ENCODE measurements at regions of chr14 and their contacts with region 1.

Region 1: GRCh38 chr14:91286530-91286937 is 42.0 kb upstream of the GPR68 start:
- H3K4me3 ChIP-seq: no peak overlapping the region
- H3K27ac ChIP-seq: no peak overlapping the region
- H3K4me1 ChIP-seq: peaks cover 19% of the 10 kb centered on the region
- CTCF ChIP-seq: peak; percentile 83

Region 2: GRCh38 chr14:90815822-90816700 is 470.5 kb before region 1 on chr14 and contains the start of gene TTC7B:
- CTCF ChIA-PET with region 1: no interaction called
- POLR2A ChIA-PET with region 1: no interaction called
- H3K4me3 ChIP-seq: peak within 1 kb of the TSS; percentile 85
- H3K27ac ChIP-seq: peak within 1 kb of the TSS; percentile 69; the same call in 1 of the 2 replicates
- H3K4me1 ChIP-seq: peaks cover 9% of the 10 kb centered on the region
- CTCF ChIP-seq: no peak

Region 3: GRCh38 chr14:91298576-91298975 is 12.0 kb after region 1 on chr14:
- CTCF ChIA-PET with region 1: interaction called, 10 read pairs
- POLR2A ChIA-PET with region 1: no interaction called
- H3K4me3 ChIP-seq: no peak overlapping the region
- H3K27ac ChIP-seq: no peak overlapping the region
- H3K4me1 ChIP-seq: no peaks in the 10 kb centered on the region
- CTCF ChIP-seq: no peak

Region 4: DNA sequence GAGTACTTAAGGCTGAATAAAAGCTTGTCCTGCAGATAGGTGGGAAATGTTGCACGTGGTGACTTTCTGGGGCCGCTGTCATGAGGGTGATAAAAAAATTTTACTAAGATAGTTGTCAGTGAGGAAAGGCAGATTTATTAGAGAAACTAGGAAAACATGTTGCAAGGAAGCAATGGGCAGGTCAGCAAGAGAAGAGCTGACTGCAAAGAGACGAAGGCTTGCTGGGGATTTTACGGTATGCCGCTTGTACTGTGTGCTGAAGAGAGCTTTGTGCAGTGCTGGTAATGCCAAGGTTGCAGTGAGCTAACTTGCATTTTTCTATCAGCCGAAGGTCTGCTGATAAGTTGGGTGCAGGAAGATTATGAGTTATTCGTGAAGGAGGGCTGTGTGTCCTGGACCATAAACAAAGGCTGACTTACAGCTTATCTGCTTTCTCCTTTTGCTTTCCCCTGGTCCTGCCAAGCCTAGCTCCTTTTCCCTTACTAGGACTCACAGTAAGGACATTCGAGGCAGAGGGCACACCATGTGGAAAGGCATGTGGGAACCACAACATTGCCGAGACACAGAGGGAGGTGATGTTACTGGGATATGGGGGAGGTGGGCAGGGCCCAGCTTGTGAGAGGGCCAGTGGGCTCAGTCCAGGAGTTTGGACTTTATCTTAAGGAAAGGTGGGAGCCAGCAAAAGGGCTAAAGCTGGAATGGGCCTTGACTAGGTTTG is 138.4 kb after region 1 on chr14:
- CTCF ChIA-PET with region 1: no interaction called
- POLR2A ChIA-PET with region 1: no interaction called
- H3K4me3 ChIP-seq: no peak overlapping the region
- H3K27ac ChIP-seq: no peak overlapping the region
- H3K4me1 ChIP-seq: no peaks in the 10 kb centered on the region
- CTCF ChIP-seq: no peak